Naive thymus-derived CD4-positive, alpha-beta T cell (primary cell): ENCODE measurements at regions of chr4 and their contacts with region 1.

Region 1: GRCh38 chr4:122577808-122578781 is 42.8 kb downstream of the IL21 start:
- DNase-seq: peak; percentile 12 to 95 (median 91)
- ATAC-seq: peak; percentile 90
- H3K4me3 ChIP-seq: peak overlapping the region; percentile 12
- H3K4me3 Mint-ChIP-seq: peak overlapping the region; percentile 47 to 79 (median 72)
- H3K27ac ChIP-seq: peak overlapping the region; percentile 76
- H3K27ac Mint-ChIP-seq: peak overlapping the region; percentile 82 to 98 (median 91)
- H3K4me1 ChIP-seq: peaks cover 7 to 14% of the 10 kb centered on the region in 2 donors
- H3K4me1 Mint-ChIP-seq: peaks cover 16 to 54% (median 50%) of the 10 kb centered on the region in 7 donors
- H3K27me3 ChIP-seq: no peaks in the 10 kb centered on the region
- H3K27me3 Mint-ChIP-seq: peaks cover 0 to 6% (median 0%) of the 10 kb centered on the region in 5 donors

Region 2: DNA sequence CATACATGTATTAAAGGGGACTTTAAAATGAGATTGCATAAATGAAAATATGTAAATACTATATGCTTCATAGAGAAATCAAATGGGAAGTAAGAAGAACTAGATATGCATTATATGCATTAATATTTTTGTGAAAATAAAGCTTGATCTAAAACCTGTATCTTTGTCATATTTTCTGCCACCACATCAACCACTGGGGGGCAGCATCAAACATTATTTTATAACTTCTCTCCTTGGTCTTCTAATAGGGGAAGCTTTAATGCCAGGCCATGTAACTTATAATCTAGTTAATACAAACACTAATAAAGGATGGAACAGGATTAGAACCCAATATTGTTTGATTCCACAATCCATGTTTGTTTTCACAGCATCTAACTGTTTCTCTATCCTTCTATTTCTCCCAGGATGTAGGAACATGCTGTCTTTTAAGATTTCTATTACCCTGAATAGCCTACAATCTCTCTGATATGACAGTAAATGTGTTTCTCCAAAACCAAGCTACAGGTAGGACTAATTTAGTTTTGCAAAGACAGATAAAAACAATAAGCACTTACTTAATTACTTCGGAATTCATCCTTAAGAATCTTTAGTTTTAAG is 1207.3 kb before region 1 on chr4:
- CTCF ChIA-PET with region 1: no interaction called
- POLR2A ChIA-PET with region 1: no interaction called
- intact Hi-C with region 1: loop called in 1 of 2 experiments (anchors 2 kb)
- DNase-seq: peak in 4 of 9 donors; percentile 5 to 23 (median 10)
- ATAC-seq: no peak
- H3K4me3 ChIP-seq: no peak overlapping the region
- H3K4me3 Mint-ChIP-seq: no peak overlapping the region
- H3K27ac ChIP-seq: no peak overlapping the region
- H3K27ac Mint-ChIP-seq: no peak overlapping the region
- H3K4me1 ChIP-seq: no peaks in the 10 kb centered on the region
- H3K4me1 Mint-ChIP-seq: no peaks in the 10 kb centered on the region
- H3K27me3 ChIP-seq: peaks cover 0 to 3% of the 10 kb centered on the region in 2 donors
- H3K27me3 Mint-ChIP-seq: peaks cover 9 to 30% (median 17%) of the 10 kb centered on the region in 5 donors

Region 3: GRCh38 chr4:121900132-121900983 is 677.7 kb before region 1 on chr4:
- CTCF ChIA-PET with region 1: interaction called, 18 read pairs
- POLR2A ChIA-PET with region 1: no interaction called
- intact Hi-C with region 1: loop called (anchors 1 kb)
- DNase-seq: peak in 8 of 9 donors; percentile 33 to 59 (median 54)
- ATAC-seq: peak; percentile 87
- H3K4me3 ChIP-seq: no peak overlapping the region
- H3K4me3 Mint-ChIP-seq: no peak overlapping the region
- H3K27ac ChIP-seq: no peak overlapping the region
- H3K27ac Mint-ChIP-seq: peak overlapping the region in 6 of 9 donors; percentile 1 to 84 (median 57)
- H3K4me1 ChIP-seq: peaks cover 0 to 3% of the 10 kb centered on the region in 2 donors
- H3K4me1 Mint-ChIP-seq: peaks cover 0 to 16% (median 9%) of the 10 kb centered on the region in 7 donors
- H3K27me3 ChIP-seq: no peaks in the 10 kb centered on the region
- H3K27me3 Mint-ChIP-seq: peaks cover 11 to 24% (median 13%) of the 10 kb centered on the region in 5 donors

Region 4: GRCh38 chr4:122151982-122152710 is 425.9 kb before region 1 on chr4 and contains the start of gene BLTP1:
- CTCF ChIA-PET with region 1: no interaction called
- POLR2A ChIA-PET with region 1: no interaction called
- intact Hi-C with region 1: loop called (anchors 2 kb)
- DNase-seq: peak; percentile 81 to 92 (median 87)
- ATAC-seq: peak; percentile 95
- H3K4me3 ChIP-seq: peak within 1 kb of the TSS; percentile 96
- H3K4me3 Mint-ChIP-seq: peak within 1 kb of the TSS; percentile 79 to 98 (median 98)
- H3K27ac ChIP-seq: peak within 1 kb of the TSS; percentile 85
- H3K27ac Mint-ChIP-seq: peak within 1 kb of the TSS; percentile 90 to 100 (median 97)
- H3K4me1 ChIP-seq: peaks cover 22 to 28% of the 10 kb centered on the region in 2 donors
- H3K4me1 Mint-ChIP-seq: peaks cover 41 to 84% (median 72%) of the 10 kb centered on the region in 7 donors
- H3K27me3 ChIP-seq: no peaks in the 10 kb centered on the region
- H3K27me3 Mint-ChIP-seq: no peaks in the 10 kb centered on the region
- total RNA-seq, gene BLTP1: 45.9 to 86.6 (median 72.8) TPM

Region 5: GRCh38 chr4:122364700-122365404 is 213.2 kb before region 1 on chr4:
- CTCF ChIA-PET with region 1: no interaction called
- POLR2A ChIA-PET with region 1: no interaction called
- intact Hi-C with region 1: loop called in 1 of 2 experiments (anchors 5 kb)
- DNase-seq: peak in 1 of 9 donors; percentile 8
- ATAC-seq: no peak
- H3K4me3 ChIP-seq: no peak overlapping the region
- H3K4me3 Mint-ChIP-seq: no peak overlapping the region
- H3K27ac ChIP-seq: no peak overlapping the region
- H3K27ac Mint-ChIP-seq: no peak overlapping the region
- H3K4me1 ChIP-seq: no peaks in the 10 kb centered on the region
- H3K4me1 Mint-ChIP-seq: peaks cover 0 to 5% (median 0%) of the 10 kb centered on the region in 7 donors
- H3K27me3 ChIP-seq: no peaks in the 10 kb centered on the region
- H3K27me3 Mint-ChIP-seq: peaks cover 0 to 3% (median 0%) of the 10 kb centered on the region in 5 donors

Region 6: GRCh38 chr4:122602277-122603142 is 24.4 kb after region 1 on chr4:
- CTCF ChIA-PET with region 1: no interaction called
- POLR2A ChIA-PET with region 1: no interaction called
- intact Hi-C with region 1: loop called (anchors 1 kb)
- DNase-seq: peak in 5 of 9 donors; percentile 13 to 33 (median 24)
- ATAC-seq: peak; percentile 42
- H3K4me3 ChIP-seq: no peak overlapping the region
- H3K4me3 Mint-ChIP-seq: peak overlapping the region in 6 of 10 donors; percentile 3 to 39 (median 26)
- H3K27ac ChIP-seq: no peak overlapping the region
- H3K27ac Mint-ChIP-seq: peak overlapping the region in 2 of 9 donors; percentile 10 to 29
- H3K4me1 ChIP-seq: no peaks in the 10 kb centered on the region
- H3K4me1 Mint-ChIP-seq: peaks cover 0 to 26% (median 5%) of the 10 kb centered on the region in 7 donors
- H3K27me3 ChIP-seq: no peaks in the 10 kb centered on the region
- H3K27me3 Mint-ChIP-seq: peaks cover 0 to 19% (median 0%) of the 10 kb centered on the region in 5 donors

Region 7: DNA sequence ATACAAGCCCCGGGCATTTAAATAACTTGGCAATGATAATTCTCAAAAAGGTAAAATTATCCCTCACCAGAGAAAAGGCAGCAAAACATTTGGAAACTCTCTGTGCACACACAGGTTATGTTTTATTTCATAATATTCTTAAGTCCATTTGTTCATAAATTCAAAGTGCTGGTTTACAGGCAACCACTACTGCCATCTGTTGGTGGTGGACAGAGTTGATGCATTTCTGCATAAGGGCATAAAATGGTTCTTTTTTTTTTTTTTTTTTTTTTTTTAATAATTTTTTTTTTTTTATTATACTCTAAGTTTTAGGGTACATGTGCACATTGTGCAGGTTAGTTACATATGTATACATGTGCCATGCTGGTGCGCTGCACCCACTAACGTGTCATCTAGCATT is 74.3 kb after region 1 on chr4:
- CTCF ChIA-PET with region 1: no interaction called
- POLR2A ChIA-PET with region 1: no interaction called
- intact Hi-C with region 1: no loop called
- DNase-seq: peak in 6 of 9 donors; percentile 18 to 39 (median 23)
- ATAC-seq: peak; percentile 57
- H3K4me3 ChIP-seq: no peak overlapping the region
- H3K4me3 Mint-ChIP-seq: no peak overlapping the region
- H3K27ac ChIP-seq: no peak overlapping the region
- H3K27ac Mint-ChIP-seq: no peak overlapping the region
- H3K4me1 ChIP-seq: no peaks in the 10 kb centered on the region
- H3K4me1 Mint-ChIP-seq: peaks cover 0 to 12% (median 0%) of the 10 kb centered on the region in 7 donors
- H3K27me3 ChIP-seq: no peaks in the 10 kb centered on the region
- H3K27me3 Mint-ChIP-seq: no peaks in the 10 kb centered on the region

Region 8: DNA sequence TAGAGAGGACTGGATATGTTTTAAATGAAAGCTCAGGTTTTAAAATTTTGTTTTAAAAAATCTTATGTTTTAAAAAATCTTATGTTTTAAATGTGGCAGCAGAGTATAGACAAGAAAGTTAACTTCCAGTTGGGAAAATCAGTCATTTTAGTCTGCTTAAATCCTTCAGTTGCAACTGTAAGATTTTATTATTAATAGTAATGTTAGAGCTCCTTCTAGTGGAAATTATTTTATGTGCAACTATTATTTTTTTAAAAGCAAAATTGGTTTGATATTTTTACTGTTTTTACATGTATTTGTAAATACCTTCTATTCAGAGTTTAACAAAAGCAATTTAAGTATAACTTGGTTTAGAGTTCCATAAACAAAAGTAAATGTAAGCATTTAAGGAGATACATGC is 352.8 kb after region 1 on chr4:
- CTCF ChIA-PET with region 1: interaction called, 12 read pairs
- POLR2A ChIA-PET with region 1: no interaction called
- intact Hi-C with region 1: no loop called
- DNase-seq: peak in 3 of 9 donors; percentile 6 to 17 (median 14)
- ATAC-seq: no peak
- H3K4me3 ChIP-seq: no peak overlapping the region
- H3K4me3 Mint-ChIP-seq: no peak overlapping the region
- H3K27ac ChIP-seq: no peak overlapping the region
- H3K27ac Mint-ChIP-seq: no peak overlapping the region
- H3K4me1 ChIP-seq: no peaks in the 10 kb centered on the region
- H3K4me1 Mint-ChIP-seq: peaks cover 0 to 36% (median 7%) of the 10 kb centered on the region in 7 donors
- H3K27me3 ChIP-seq: no peaks in the 10 kb centered on the region
- H3K27me3 Mint-ChIP-seq: no peaks in the 10 kb centered on the region